WTC11 (cell line): ENCODE measurements at regions of chr1 and their contacts with region 1.

Region 1: DNA sequence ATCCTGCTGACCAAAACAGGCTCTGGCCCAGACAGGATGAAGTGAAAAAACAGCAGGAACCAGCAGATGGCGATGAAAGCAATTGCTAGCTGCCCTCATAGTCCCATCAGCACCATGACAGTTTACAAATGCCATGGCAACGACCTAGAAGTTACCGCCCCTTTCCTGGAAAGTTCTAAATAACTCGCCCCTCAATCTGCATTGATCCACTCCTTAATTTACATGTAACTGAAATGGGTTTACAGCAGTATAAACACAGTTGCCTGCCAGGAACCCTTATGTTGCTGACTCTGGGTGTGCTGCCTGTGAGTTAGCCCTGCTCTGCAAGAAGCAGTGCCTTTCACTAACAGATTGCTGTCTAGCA is 65.5 kb upstream of the CR1L start:
- DNase-seq: peak; percentile 72
- ATAC-seq: peak; percentile 98
- H3K4me3 Mint-ChIP-seq: no peak overlapping the region
- H3K27ac Mint-ChIP-seq: 0 out of 2 replicates have a peak overlapping the region, but pooled peaks have one; percentile 18
- H3K4me1 Mint-ChIP-seq: peaks cover 23% of the 10 kb centered on the region
- H3K27me3 Mint-ChIP-seq: no peaks in the 10 kb centered on the region; the same call in 1 of the 2 replicates
- CTCF ChIP-seq: 0 out of 2 replicates have a peak, but pooled peaks have one; percentile 24

Region 2: DNA sequence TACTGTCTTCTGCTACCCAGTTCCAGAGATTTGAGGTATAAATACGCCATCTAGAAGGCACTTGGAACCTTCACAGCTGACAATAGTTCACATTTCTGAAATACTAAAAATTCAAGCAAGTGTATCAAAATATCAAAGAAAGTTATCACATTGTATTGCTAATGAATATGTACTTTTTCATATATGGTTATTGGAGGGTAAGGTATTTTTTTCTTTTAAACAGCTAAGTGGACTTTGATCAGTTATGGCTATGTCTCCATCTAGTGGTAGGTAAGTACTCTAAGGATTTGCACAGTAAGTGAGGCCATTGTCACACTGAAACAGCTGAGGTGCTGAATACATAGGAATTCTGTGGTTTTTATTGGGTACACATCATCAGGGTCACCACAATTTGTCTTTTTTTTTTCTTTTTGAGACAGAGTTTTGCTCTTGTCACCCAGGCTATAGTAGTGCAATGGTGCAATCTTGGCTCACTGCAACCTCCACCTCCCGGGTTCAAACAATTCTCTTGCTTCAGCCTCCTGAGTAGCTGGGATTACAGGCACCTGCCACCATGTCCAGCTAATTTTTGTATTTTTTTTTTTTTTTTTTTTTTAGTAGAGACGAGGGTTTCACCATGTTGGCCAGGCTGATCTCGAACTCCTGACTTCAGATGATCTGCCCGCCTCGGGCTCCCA is 174.4 kb before region 1 on chr1:
- CTCF ChIA-PET with region 1: no interaction called
- POLR2A ChIA-PET with region 1: no interaction called
- DNase-seq: no peak
- ATAC-seq: peak; percentile 79
- H3K4me3 Mint-ChIP-seq: no peak overlapping the region
- H3K27ac Mint-ChIP-seq: no peak overlapping the region
- H3K4me1 Mint-ChIP-seq: no peaks in the 10 kb centered on the region
- H3K27me3 Mint-ChIP-seq: no peaks in the 10 kb centered on the region
- CTCF ChIP-seq: peak; percentile 52

Region 3: GRCh38 chr1:207454046-207454964 is 125.1 kb before region 1 on chr1 and contains the start of gene CR2:
- CTCF ChIA-PET with region 1: no interaction called
- POLR2A ChIA-PET with region 1: no interaction called
- DNase-seq: peak; percentile 80
- ATAC-seq: peak; percentile 98
- H3K4me3 Mint-ChIP-seq: peak within 1 kb of the TSS; percentile 67
- H3K27ac Mint-ChIP-seq: no peak within 1 kb of the TSS
- H3K4me1 Mint-ChIP-seq: peaks cover 4% of the 10 kb centered on the region
- H3K27me3 Mint-ChIP-seq: peaks cover 27% of the 10 kb centered on the region
- CTCF ChIP-seq: no peak
- total RNA-seq, gene CR2: 3.8 to 7.6 TPM (median 6.5 TPM) in 3 replicates

Region 4: DNA sequence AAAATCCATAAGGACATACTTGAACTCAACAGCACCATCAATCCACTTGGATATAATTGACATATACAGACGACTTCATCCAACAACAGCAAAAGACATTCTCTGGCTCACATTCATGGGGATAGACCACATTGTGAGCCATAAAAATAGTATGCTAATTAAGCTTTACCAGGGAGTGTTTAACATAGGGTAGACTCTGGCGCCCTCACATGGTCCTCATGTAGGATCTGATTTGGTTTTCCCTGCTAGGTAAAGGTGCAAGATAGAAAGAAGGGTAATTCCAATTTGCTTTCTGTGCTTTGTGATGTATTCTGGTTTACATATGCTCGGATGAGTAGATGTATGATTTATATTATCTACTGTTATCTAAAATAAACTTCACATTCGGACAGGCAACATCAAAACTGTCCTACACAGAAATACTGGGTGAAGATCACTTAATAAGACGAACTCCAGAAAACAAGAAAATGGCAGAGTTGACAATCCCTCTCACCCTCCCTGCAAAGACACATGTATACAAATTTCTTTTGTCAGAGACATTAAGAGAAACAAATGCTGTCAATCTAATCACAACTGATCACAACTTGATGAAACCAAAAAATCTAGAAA is 93.2 kb after region 1 on chr1:
- CTCF ChIA-PET with region 1: interaction called, 36 read pairs
- POLR2A ChIA-PET with region 1: no interaction called
- DNase-seq: peak; percentile 47
- ATAC-seq: peak; percentile 89
- H3K4me3 Mint-ChIP-seq: no peak overlapping the region
- H3K27ac Mint-ChIP-seq: no peak overlapping the region; the same call in 1 of the 2 replicates
- H3K4me1 Mint-ChIP-seq: peaks cover 40% of the 10 kb centered on the region
- H3K27me3 Mint-ChIP-seq: peaks cover 25% of the 10 kb centered on the region
- CTCF ChIP-seq: peak; percentile 37; the same call in 1 of the 2 replicates